Heart left ventricle (tissue), 16 donors: ENCODE measurements at regions of chr1 and their contacts with region 1.

Region 1: DNA sequence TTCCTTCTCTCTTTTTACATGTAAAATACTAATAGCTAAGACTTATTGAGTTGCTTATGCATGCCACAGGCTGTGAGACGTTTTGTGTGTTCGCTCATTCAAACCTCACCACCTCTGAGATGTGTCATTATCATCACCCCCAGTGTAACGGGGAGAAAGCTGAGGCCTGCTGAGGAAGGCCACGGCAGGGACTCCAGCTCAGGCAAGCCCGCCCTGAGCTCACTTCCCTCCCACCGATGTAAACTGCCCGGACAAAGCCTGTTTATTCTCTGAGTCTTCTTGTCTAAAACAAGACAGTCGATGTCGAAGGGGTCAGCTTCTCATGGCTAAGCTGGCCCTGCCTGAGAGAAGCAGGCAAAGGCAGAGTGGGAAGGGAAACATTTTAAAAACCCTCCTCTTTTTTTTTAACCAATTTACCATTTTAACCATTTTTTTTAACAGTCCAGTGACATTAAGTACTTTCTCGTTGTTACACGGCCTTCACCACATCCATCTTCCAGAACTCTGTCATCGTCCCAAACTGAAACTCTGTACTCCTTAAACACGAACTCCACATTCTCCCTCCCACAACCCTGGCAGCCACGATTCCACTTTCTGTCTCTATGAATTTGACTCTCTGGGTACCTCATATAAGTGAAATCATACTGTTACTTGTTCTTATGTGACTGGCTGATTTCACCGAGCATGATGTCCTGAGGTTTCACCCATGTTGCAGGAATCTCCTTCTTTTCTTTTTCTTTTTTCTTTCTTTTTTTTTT is 204.8 kb upstream of the GALNT2 start:
- DNase-seq: no peak
- ATAC-seq: no peak
- H3K4me3 ChIP-seq: no peak overlapping the region
- H3K27ac ChIP-seq: peak overlapping the region in 10 of 12 donors; percentile 20 to 90 (median 36)
- H3K4me1 ChIP-seq: peaks cover 0 to 46% (median 18%) of the 10 kb centered on the region in 12 donors
- H3K27me3 ChIP-seq: no peaks in the 10 kb centered on the region
- CTCF ChIP-seq: no peak
- POLR2A ChIP-seq: no peak

Region 2: GRCh38 chr1:229318056-229318455 is 544.1 kb before region 1 on chr1:
- intact Hi-C with region 1: no loop called
- DNase-seq: no peak
- ATAC-seq: no peak
- H3K4me3 ChIP-seq: no peak overlapping the region
- H3K27ac ChIP-seq: no peak overlapping the region
- H3K4me1 ChIP-seq: no peaks in the 10 kb centered on the region
- H3K27me3 ChIP-seq: no peaks in the 10 kb centered on the region
- CTCF ChIP-seq: no peak
- POLR2A ChIP-seq: no peak

Region 3: GRCh38 chr1:229440851-229441537 is 421.2 kb before region 1 on chr1:
- intact Hi-C with region 1: no loop called
- DNase-seq: peak in 2 of 5 donors; percentile 32 to 44
- ATAC-seq: peak; percentile 36 to 76 (median 61)
- H3K4me3 ChIP-seq: no peak overlapping the region
- H3K27ac ChIP-seq: peak overlapping the region in 8 of 12 donors; percentile 39 to 75 (median 56)
- H3K4me1 ChIP-seq: peaks cover 0 to 17% (median 0%) of the 10 kb centered on the region in 12 donors
- H3K27me3 ChIP-seq: no peaks in the 10 kb centered on the region
- CTCF ChIP-seq: no peak
- POLR2A ChIP-seq: no peak

Region 4: DNA sequence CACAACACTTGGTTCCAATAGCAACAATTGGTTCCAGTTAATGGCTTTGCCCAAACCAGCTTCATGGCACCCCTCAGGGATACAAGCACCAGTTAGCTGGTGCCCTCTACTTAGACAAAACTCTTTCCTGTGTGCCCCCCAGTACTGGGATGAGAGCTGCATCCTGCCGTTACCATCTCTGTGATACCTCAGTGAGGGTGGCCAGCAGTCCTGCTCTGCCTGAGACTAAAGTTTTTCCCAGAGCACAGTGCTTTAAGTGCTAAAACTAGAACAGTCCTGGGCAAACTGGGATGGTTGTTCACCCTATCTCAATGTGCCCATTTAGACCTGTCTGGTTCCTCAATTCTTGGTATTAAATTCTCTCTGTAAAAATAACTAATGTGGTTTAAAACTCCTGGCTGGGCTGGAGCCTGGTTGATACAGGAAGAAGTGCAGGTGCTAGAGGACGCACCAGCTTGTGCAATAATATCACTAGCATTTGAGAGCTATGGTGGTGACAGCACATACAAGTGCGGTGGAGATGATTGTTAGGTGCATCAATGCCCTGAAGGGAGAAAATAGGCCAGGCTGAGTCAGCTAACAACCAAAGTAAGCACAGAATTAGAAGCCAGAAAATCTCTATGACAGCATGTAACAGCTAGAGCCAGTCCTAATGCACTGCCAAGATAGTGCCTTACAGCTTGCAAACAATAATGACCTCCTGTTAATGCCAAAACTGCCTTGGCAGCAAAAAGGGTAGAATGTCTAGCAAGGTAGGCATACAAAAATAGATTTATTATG is 25.0 kb after region 1 on chr1:
- intact Hi-C with region 1: loop called in 3 of 10 experiments (anchors 1 to 2 kb)
- DNase-seq: peak in 4 of 5 donors; percentile 48 to 63 (median 51)
- ATAC-seq: peak; percentile 86 to 95 (median 88)
- H3K4me3 ChIP-seq: no peak overlapping the region
- H3K27ac ChIP-seq: peak overlapping the region in 11 of 12 donors; percentile 59 to 89 (median 78)
- H3K4me1 ChIP-seq: peaks cover 0 to 22% (median 7%) of the 10 kb centered on the region in 12 donors
- H3K27me3 ChIP-seq: no peaks in the 10 kb centered on the region
- CTCF ChIP-seq: no peak
- POLR2A ChIP-seq: no peak